B cell (primary cell): ENCODE measurements at regions of chr15 and their contacts with region 1.

Region 1: DNA sequence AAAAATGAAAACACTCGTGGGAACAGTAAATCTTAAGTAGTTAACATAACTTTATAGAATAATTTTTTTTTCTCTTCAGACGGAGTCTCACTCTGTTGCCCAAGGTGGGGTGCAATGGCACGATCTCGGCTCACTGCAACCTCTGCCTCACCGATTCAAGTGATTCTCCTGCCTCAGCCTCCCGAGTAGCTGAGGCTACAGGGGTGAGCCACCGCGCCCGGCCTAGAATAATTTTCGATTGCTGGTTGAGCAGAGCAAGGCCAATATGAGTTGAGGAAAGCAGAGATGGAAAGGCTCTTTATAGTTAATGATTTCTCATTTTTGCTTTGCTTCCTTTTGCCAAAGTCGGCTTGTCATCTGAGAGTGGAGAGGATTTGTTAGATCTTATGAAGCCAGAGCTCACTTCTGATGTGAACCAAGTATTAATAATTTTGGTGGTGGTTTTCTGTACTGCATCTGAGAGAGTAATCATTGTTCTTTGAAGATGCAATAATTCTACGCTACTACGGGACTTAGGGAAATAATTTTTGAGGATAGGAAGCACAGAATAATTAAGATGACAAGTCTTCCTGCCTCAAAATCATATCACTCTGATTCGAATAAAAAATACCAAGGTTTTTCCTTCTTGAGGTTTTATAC is 1.6 kb upstream of the GOLM2 start:
- DNase-seq: peak; percentile 25
- ATAC-seq: no peak
- H3K4me3 ChIP-seq: peak overlapping the region in 4 of 5 experiments; percentile 84 to 100 (median 99)
- H3K4me3 Mint-ChIP-seq: peak overlapping the region; percentile 95
- H3K27ac ChIP-seq: peak overlapping the region; percentile 77 to 95
- H3K27ac Mint-ChIP-seq: peak overlapping the region; percentile 97
- H3K4me1 ChIP-seq: peaks cover 22 to 29% of the 10 kb centered on the region in 2 donors
- H3K4me1 Mint-ChIP-seq: peaks cover 37% of the 10 kb centered on the region
- H3K27me3 ChIP-seq: no peaks in the 10 kb centered on the region
- H3K27me3 Mint-ChIP-seq: peaks cover 4% of the 10 kb centered on the region
- CTCF ChIP-seq: peak; percentile 46

Region 2: DNA sequence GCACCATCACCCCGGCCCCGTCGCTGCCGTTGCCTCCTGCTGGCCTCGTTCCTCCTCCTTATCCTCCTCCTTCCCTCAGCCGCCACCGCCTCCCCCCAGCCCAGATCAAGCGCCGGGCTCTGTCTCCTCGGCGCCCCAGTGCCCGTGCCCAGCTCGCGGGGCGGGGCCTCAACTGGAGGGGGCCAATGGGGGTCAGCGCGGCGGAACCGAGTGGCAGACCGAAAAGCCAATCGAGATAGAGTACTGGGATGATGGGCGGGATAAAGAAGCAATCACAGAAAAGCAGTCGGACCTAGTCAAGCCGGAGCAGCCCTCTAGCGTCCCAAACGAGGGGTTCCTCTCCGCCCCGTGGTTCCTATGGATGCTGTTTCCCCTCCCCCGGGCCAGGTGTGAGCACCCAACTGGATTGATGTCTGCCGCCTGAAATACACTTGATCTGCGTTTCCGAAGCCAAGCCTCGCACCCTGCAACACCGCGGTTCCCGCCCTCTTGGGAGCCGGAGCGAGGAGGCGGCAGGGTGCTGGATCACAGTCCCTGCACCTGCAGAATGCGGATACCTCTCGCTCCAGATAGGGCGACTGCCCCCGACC is 91.7 kb before region 1 on chr15 and contains the start of gene FRMD5:
- CTCF ChIA-PET with region 1: no interaction called
- POLR2A ChIA-PET with region 1: no interaction called
- intact Hi-C with region 1: loop called (anchors 1 kb)
- DNase-seq: peak; percentile 92
- ATAC-seq: peak; percentile 97
- H3K4me3 ChIP-seq: peak within 1 kb of the TSS; percentile 38 to 73 (median 54)
- H3K4me3 Mint-ChIP-seq: peak within 1 kb of the TSS; percentile 90
- H3K27ac ChIP-seq: no peak within 1 kb of the TSS
- H3K27ac Mint-ChIP-seq: peak within 1 kb of the TSS; percentile 76
- H3K4me1 ChIP-seq: peaks cover 18 to 23% of the 10 kb centered on the region in 2 donors
- H3K4me1 Mint-ChIP-seq: peaks cover 21% of the 10 kb centered on the region
- H3K27me3 ChIP-seq: peaks cover 0 to 50% (median 40%) of the 10 kb centered on the region in 4 experiments
- H3K27me3 Mint-ChIP-seq: peaks cover 69% of the 10 kb centered on the region
- CTCF ChIP-seq: no peak
- total RNA-seq, gene FRMD5: not detected in 2 replicates

Region 3: DNA sequence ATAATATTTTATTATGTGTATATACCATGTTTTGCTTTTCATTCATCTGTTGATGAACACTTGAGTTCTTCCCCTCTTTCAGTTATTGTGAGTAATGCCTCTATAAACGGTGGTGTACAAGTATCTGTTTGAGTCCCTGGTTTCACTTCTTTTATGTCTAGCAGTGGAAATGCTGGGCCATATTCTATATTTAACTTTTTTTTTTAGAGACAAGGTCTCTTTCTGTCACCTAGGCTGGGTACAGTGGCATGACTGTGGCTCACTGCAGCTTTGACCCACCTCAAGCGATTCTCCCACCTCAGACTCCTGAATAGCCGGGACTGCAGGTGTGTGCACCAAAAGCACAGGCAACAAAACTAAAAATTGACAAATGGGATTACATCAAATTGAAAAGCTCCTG is 21.5 kb after region 1 on chr15:
- CTCF ChIA-PET with region 1: interaction called, 8 read pairs
- POLR2A ChIA-PET with region 1: interaction called, 4 read pairs
- intact Hi-C with region 1: loop called (anchors 2 kb)
- DNase-seq: peak; percentile 44
- ATAC-seq: peak; percentile 80
- H3K4me3 ChIP-seq: peak overlapping the region in 1 of 5 experiments; percentile 39
- H3K4me3 Mint-ChIP-seq: peak overlapping the region; percentile 68
- H3K27ac ChIP-seq: peak overlapping the region; percentile 54 to 79
- H3K27ac Mint-ChIP-seq: peak overlapping the region; percentile 71
- H3K4me1 ChIP-seq: peaks cover 39 to 44% of the 10 kb centered on the region in 2 donors
- H3K4me1 Mint-ChIP-seq: peaks cover 51% of the 10 kb centered on the region
- H3K27me3 ChIP-seq: no peaks in the 10 kb centered on the region
- H3K27me3 Mint-ChIP-seq: no peaks in the 10 kb centered on the region
- CTCF ChIP-seq: no peak

Region 4: GRCh38 chr15:44319385-44319784 is 32.5 kb after region 1 on chr15:
- CTCF ChIA-PET with region 1: interaction called, 14 read pairs
- POLR2A ChIA-PET with region 1: interaction called, 3 read pairs
- intact Hi-C with region 1: no loop called
- DNase-seq: peak; percentile 64
- ATAC-seq: peak; percentile 69
- H3K4me3 ChIP-seq: no peak overlapping the region
- H3K4me3 Mint-ChIP-seq: no peak overlapping the region
- H3K27ac ChIP-seq: no peak overlapping the region
- H3K27ac Mint-ChIP-seq: peak overlapping the region; percentile 23
- H3K4me1 ChIP-seq: peaks cover 0 to 5% of the 10 kb centered on the region in 2 donors
- H3K4me1 Mint-ChIP-seq: peaks cover 22% of the 10 kb centered on the region
- H3K27me3 ChIP-seq: no peaks in the 10 kb centered on the region
- H3K27me3 Mint-ChIP-seq: no peaks in the 10 kb centered on the region
- CTCF ChIP-seq: peak; percentile 74

Region 5: DNA sequence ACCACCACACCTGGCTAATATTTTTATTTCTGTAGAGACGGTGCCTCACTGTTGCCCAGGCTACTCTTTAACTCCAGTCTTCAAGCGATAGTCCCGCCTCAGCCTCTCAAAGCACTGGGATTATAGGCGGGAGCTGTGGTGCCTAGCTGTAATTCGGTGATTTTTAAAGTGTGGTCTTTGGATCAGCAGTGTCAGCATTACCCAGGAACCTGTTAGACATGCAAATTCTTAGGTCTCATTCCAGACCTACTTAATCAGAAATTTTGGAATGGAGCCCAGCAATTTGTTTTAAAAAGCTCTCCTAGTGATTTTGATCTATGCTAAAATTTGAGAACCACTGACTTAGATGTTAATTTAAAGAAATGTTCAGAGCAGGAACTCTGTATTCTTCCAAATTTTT is 53.5 kb after region 1 on chr15:
- CTCF ChIA-PET with region 1: no interaction called
- POLR2A ChIA-PET with region 1: no interaction called
- intact Hi-C with region 1: no loop called
- DNase-seq: no peak
- ATAC-seq: no peak
- H3K4me3 ChIP-seq: no peak overlapping the region
- H3K4me3 Mint-ChIP-seq: no peak overlapping the region
- H3K27ac ChIP-seq: no peak overlapping the region
- H3K27ac Mint-ChIP-seq: no peak overlapping the region
- H3K4me1 ChIP-seq: no peaks in the 10 kb centered on the region
- H3K4me1 Mint-ChIP-seq: no peaks in the 10 kb centered on the region
- H3K27me3 ChIP-seq: no peaks in the 10 kb centered on the region
- H3K27me3 Mint-ChIP-seq: no peaks in the 10 kb centered on the region
- CTCF ChIP-seq: no peak

Region 6: GRCh38 chr15:44426975-44427755 is 140.2 kb after region 1 on chr15 and contains the start of gene CTDSPL2:
- CTCF ChIA-PET with region 1: interaction called, 3 read pairs
- POLR2A ChIA-PET with region 1: interaction called, 8 read pairs
- intact Hi-C with region 1: loop called (anchors 1 kb)
- DNase-seq: peak; percentile 94
- ATAC-seq: peak; percentile 97
- H3K4me3 ChIP-seq: peak within 1 kb of the TSS; percentile 93 to 100 (median 98)
- H3K4me3 Mint-ChIP-seq: peak within 1 kb of the TSS; percentile 96
- H3K27ac ChIP-seq: peak within 1 kb of the TSS; percentile 95 to 98
- H3K27ac Mint-ChIP-seq: peak within 1 kb of the TSS; percentile 98
- H3K4me1 ChIP-seq: peaks cover 18 to 23% of the 10 kb centered on the region in 2 donors
- H3K4me1 Mint-ChIP-seq: peaks cover 46% of the 10 kb centered on the region
- H3K27me3 ChIP-seq: no peaks in the 10 kb centered on the region
- H3K27me3 Mint-ChIP-seq: no peaks in the 10 kb centered on the region
- CTCF ChIP-seq: peak; percentile 34
- total RNA-seq, gene CTDSPL2: 79.5 and 84.1 TPM in 2 replicates

Region 7: GRCh38 chr15:44536962-44537734 is 250.2 kb after region 1 on chr15 and contains the start of gene EIF3J:
- CTCF ChIA-PET with region 1: no interaction called
- POLR2A ChIA-PET with region 1: interaction called, 7 read pairs
- intact Hi-C with region 1: loop called (anchors 1 kb)
- DNase-seq: peak; percentile 97
- ATAC-seq: peak; percentile 89
- H3K4me3 ChIP-seq: peak within 1 kb of the TSS; percentile 82 to 99 (median 92)
- H3K4me3 Mint-ChIP-seq: peak within 1 kb of the TSS; percentile 93
- H3K27ac ChIP-seq: peak within 1 kb of the TSS; percentile 83 to 94
- H3K27ac Mint-ChIP-seq: peak within 1 kb of the TSS; percentile 98
- H3K4me1 ChIP-seq: peaks cover 15 to 21% of the 10 kb centered on the region in 2 donors
- H3K4me1 Mint-ChIP-seq: peaks cover 40% of the 10 kb centered on the region
- H3K27me3 ChIP-seq: no peaks in the 10 kb centered on the region
- H3K27me3 Mint-ChIP-seq: no peaks in the 10 kb centered on the region
- CTCF ChIP-seq: no peak
- total RNA-seq, gene EIF3J: 61.0 and 66.7 TPM in 2 replicates

Region 8: GRCh38 chr15:44606740-44607139 is 319.8 kb after region 1 on chr15:
- CTCF ChIA-PET with region 1: no interaction called
- POLR2A ChIA-PET with region 1: no interaction called
- intact Hi-C with region 1: no loop called
- DNase-seq: no peak
- ATAC-seq: no peak
- H3K4me3 ChIP-seq: no peak overlapping the region
- H3K4me3 Mint-ChIP-seq: no peak overlapping the region
- H3K27ac ChIP-seq: no peak overlapping the region
- H3K27ac Mint-ChIP-seq: no peak overlapping the region
- H3K4me1 ChIP-seq: no peaks in the 10 kb centered on the region
- H3K4me1 Mint-ChIP-seq: no peaks in the 10 kb centered on the region
- H3K27me3 ChIP-seq: no peaks in the 10 kb centered on the region
- H3K27me3 Mint-ChIP-seq: no peaks in the 10 kb centered on the region
- CTCF ChIP-seq: no peak

Region 9: GRCh38 chr15:44728576-44729407 is 441.9 kb after region 1 on chr15:
- CTCF ChIA-PET with region 1: no interaction called
- POLR2A ChIA-PET with region 1: no interaction called
- intact Hi-C with region 1: loop called (anchors 5 kb)
- DNase-seq: peak; percentile 98
- ATAC-seq: peak; percentile 77
- H3K4me3 ChIP-seq: peak overlapping the region; percentile 62 to 94 (median 88)
- H3K4me3 Mint-ChIP-seq: peak overlapping the region; percentile 99
- H3K27ac ChIP-seq: peak overlapping the region; percentile 94 to 95
- H3K27ac Mint-ChIP-seq: peak overlapping the region; percentile 99
- H3K4me1 ChIP-seq: peaks cover 61 to 70% of the 10 kb centered on the region in 2 donors
- H3K4me1 Mint-ChIP-seq: peaks cover 74% of the 10 kb centered on the region
- H3K27me3 ChIP-seq: no peaks in the 10 kb centered on the region
- H3K27me3 Mint-ChIP-seq: no peaks in the 10 kb centered on the region
- CTCF ChIP-seq: no peak